ENCODE measurements at regions of chr22 and their contacts with region 1.

Region 1: GRCh38 chr22:28963362-28963761 is 80.0 kb downstream of the ZNRF3 start:
- DNase-seq: no peak
- H3K4me3 ChIP-seq: no peak overlapping the region
- H3K27ac ChIP-seq: no peak overlapping the region
- H3K4me1 ChIP-seq: no peaks in the 10 kb centered on the region
- H3K27me3 ChIP-seq: no peaks in the 10 kb centered on the region
- CTCF ChIP-seq: no peak

Region 2: GRCh38 chr22:28899199-28899853 is 64.0 kb before region 1 on chr22:
- CTCF ChIA-PET with region 1: no interaction called
- dilution Hi-C with region 1: loop called (anchors 5 kb)
- in situ Hi-C with region 1: no loop called
- intact Hi-C with region 1: no loop called
- DNase-seq: peak; percentile 87
- H3K4me3 ChIP-seq: no peak overlapping the region
- H3K27ac ChIP-seq: peak overlapping the region; percentile 66
- H3K4me1 ChIP-seq: peaks cover 69% of the 10 kb centered on the region
- H3K27me3 ChIP-seq: no peaks in the 10 kb centered on the region
- CTCF ChIP-seq: no peak

Measured in mammary epithelial cell (primary cell).